GM12878 (cell line): ENCODE measurements at regions of chr9 and their contacts with region 1.

Region 1: GRCh38 chr9:99140685-99141314 is 35.9 kb downstream of the TGFBR1 start:
- DNase-seq: no peak
- ATAC-seq: peak; percentile 91
- H3K4me3 ChIP-seq: no peak overlapping the region
- H3K27ac ChIP-seq: no peak overlapping the region
- H3K4me1 ChIP-seq: peaks cover 5% of the 10 kb centered on the region
- H3K27me3 ChIP-seq: no peaks in the 10 kb centered on the region
- CTCF ChIP-seq: peak; percentile 97 to 98 (median 97)
- EP300 ChIP-seq: no peak
- POLR2A ChIP-seq: no peak
- RAD21 ChIP-seq: peak; percentile 98

Region 2: DNA sequence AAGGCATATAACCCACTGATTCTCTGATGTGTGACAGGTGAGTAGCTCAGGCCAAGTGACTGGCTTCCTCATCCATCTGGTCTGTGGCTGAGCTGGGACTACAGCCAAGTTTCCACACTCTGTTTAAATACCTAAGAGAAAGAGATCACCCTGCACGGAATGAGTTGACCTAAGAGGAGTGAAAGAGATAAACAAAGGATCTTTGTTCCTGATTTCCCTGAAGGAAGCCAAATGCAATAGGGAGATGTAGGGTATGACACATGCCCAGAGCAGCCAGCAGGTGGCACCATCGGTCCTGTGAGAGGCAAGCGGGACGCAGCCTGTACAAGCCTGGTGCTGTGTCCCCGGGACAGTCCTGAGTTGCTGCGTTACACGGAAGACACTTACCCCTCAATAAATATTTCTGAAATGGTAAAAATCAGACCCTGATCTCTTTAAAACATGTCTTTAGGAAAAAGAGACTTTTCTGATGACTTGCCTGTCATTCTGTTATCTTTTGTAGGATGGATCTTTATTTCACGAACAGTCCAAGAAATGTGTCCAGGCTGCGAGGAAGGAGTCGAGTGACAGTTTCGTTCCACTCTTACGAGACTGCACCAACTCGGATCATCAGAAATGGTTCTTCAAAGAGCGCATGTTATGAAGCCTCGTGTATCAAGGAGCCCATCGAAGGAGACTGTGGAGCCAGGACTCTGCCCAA is 292.2 kb before region 1 on chr9:
- CTCF ChIA-PET with region 1: interaction called, 78 read pairs
- POLR2A ChIA-PET with region 1: no interaction called
- RAD21 ChIA-PET with region 1: interaction called, 31 read pairs
- SMC1A ChIA-PET with region 1: interaction called, 17 read pairs
- in situ Hi-C with region 1: loop called (anchors 5 kb)
- intact Hi-C with region 1: loop called (anchors 1 kb)
- DNase-seq: peak; percentile 23
- ATAC-seq: peak; percentile 100
- H3K4me3 ChIP-seq: no peak overlapping the region
- H3K27ac ChIP-seq: no peak overlapping the region
- H3K4me1 ChIP-seq: no peaks in the 10 kb centered on the region
- H3K27me3 ChIP-seq: no peaks in the 10 kb centered on the region; a peak in 1 of 4 replicates
- CTCF ChIP-seq: peak; percentile 90 to 96 (median 94)
- EP300 ChIP-seq: no peak
- POLR2A ChIP-seq: no peak
- RAD21 ChIP-seq: peak; percentile 86

Region 3: GRCh38 chr9:98998441-98999151 is 142.2 kb before region 1 on chr9:
- CTCF ChIA-PET with region 1: interaction called, 304 read pairs
- POLR2A ChIA-PET with region 1: no interaction called
- RAD21 ChIA-PET with region 1: interaction called, 17 read pairs
- SMC1A ChIA-PET with region 1: interaction called, 110 read pairs
- in situ Hi-C with region 1: loop called (anchors 5 kb)
- intact Hi-C with region 1: loop called (anchors 1 kb)
- DNase-seq: no peak
- ATAC-seq: peak; percentile 92
- H3K4me3 ChIP-seq: no peak overlapping the region
- H3K27ac ChIP-seq: no peak overlapping the region
- H3K4me1 ChIP-seq: peaks cover 2% of the 10 kb centered on the region
- H3K27me3 ChIP-seq: 0 out of 4 replicates have a peak, but pooled peaks cover 0 to 2% of the 10 kb centered on the region in 2 experiments
- CTCF ChIP-seq: peak; percentile 76 to 96 (median 81)
- EP300 ChIP-seq: no peak
- POLR2A ChIP-seq: no peak
- RAD21 ChIP-seq: peak; percentile 62

Region 4: DNA sequence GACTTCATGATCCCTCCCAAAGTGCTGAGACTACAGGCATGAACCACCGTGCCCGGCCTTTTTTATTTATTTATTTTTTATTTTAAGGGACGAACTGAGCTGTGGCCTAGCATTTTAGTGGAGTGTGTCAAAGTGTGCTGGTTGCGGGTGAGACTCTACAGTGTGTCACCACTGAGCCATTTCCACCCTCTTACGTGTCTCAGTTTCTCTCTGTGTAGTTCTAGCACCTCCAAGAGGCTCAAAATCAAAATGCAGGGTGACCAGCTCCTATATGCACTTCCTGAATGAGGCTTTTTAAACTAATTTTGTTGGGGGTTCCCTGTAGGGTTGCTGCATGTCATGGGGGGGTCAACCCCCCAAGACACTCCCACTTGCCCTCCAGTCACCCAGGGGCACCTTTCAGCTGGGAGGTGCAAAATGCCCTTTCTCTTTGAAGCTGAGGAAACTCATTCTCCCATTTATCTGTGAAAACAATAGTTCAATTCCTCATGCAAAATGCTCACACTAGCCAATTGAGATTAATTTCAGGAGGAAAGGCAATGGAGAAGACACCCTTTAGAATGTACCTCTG is 127.8 kb before region 1 on chr9:
- CTCF ChIA-PET with region 1: interaction called, 13 read pairs
- POLR2A ChIA-PET with region 1: no interaction called
- RAD21 ChIA-PET with region 1: interaction called, 7 read pairs
- SMC1A ChIA-PET with region 1: interaction called, 17 read pairs
- in situ Hi-C with region 1: no loop called
- intact Hi-C with region 1: no loop called
- DNase-seq: no peak
- ATAC-seq: peak; percentile 51
- H3K4me3 ChIP-seq: no peak overlapping the region
- H3K27ac ChIP-seq: no peak overlapping the region
- H3K4me1 ChIP-seq: no peaks in the 10 kb centered on the region
- H3K27me3 ChIP-seq: no peaks in the 10 kb centered on the region
- CTCF ChIP-seq: 0 out of 6 replicates have a peak, but pooled peaks of 1 of the 3 experiments have one; percentile 6
- EP300 ChIP-seq: no peak
- POLR2A ChIP-seq: no peak
- RAD21 ChIP-seq: 0 out of 2 replicates have a peak, but pooled peaks have one; percentile 16

Region 5: DNA sequence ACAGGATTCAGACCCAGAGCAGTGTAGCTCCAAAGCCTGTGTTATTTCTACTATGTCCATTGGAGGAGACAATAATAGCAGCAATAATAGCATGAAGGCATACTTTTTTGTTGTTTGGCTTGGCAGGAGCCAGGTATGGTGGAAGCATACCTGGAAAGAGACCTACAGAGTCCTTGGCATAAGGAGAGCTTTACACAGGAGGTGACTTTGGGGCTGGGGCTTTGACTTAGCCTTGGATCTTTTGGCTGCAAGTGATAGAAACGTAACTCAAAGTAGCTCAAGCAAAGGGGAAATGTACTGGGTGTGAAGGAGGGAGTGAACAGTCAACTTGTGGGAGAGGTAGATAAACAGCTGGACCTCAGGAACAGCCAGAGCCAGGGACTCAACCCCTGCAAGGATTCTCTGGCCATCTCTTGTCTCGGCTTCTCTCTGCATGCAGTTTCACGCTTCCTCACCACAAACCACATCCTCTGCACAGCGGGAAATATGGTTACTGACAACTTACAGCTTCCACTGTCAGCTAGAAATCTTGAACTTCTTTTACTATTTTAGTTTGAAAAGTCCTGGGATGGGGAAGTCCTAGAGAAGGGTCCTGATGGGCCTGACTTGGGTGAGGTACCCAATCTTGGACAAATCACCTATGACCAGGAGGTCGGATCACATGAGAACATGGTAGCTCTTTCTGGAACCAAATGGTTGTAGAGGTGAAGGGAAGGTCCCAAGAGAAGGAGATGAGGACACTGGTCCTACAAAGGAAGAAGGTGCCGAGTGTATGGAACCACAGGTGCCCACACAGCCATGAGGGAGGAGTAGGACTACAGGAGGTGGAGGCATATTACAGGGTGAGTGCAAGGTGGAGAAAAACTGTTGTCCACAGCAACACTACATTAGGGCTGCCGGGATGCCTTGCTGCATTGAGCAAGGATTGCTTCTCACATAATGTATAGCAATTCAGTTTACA is 82.9 kb before region 1 on chr9:
- CTCF ChIA-PET with region 1: interaction called, 4 read pairs
- POLR2A ChIA-PET with region 1: interaction called, 3 read pairs
- RAD21 ChIA-PET with region 1: interaction called, 4 read pairs
- SMC1A ChIA-PET with region 1: interaction called, 24 read pairs
- in situ Hi-C with region 1: no loop called
- intact Hi-C with region 1: no loop called
- DNase-seq: peak; percentile 64
- ATAC-seq: peak; percentile 88
- H3K4me3 ChIP-seq: peak overlapping the region; percentile 25; the same call in 1 of the 2 replicates
- H3K27ac ChIP-seq: peak overlapping the region; percentile 15; the same call in 1 of the 2 replicates
- H3K4me1 ChIP-seq: peaks cover 27% of the 10 kb centered on the region
- H3K27me3 ChIP-seq: no peaks in the 10 kb centered on the region
- CTCF ChIP-seq: no peak
- EP300 ChIP-seq: no peak
- POLR2A ChIP-seq: no peak
- RAD21 ChIP-seq: no peak

Region 6: GRCh38 chr9:99130069-99130468 is 10.7 kb before region 1 on chr9:
- CTCF ChIA-PET with region 1: interaction called, 10 read pairs
- POLR2A ChIA-PET with region 1: interaction called, 3 read pairs
- RAD21 ChIA-PET with region 1: interaction called, 36 read pairs
- SMC1A ChIA-PET with region 1: interaction called, 129 read pairs
- in situ Hi-C with region 1: no loop called
- intact Hi-C with region 1: no loop called
- DNase-seq: peak; percentile 72
- ATAC-seq: peak; percentile 87
- H3K4me3 ChIP-seq: no peak overlapping the region
- H3K27ac ChIP-seq: peak overlapping the region; percentile 22
- H3K4me1 ChIP-seq: peaks cover 38% of the 10 kb centered on the region
- H3K27me3 ChIP-seq: no peaks in the 10 kb centered on the region
- CTCF ChIP-seq: no peak
- EP300 ChIP-seq: peak; percentile 81 to 95
- POLR2A ChIP-seq: no peak
- RAD21 ChIP-seq: 0 out of 2 replicates have a peak, but pooled peaks have one; percentile 2

Region 7: DNA sequence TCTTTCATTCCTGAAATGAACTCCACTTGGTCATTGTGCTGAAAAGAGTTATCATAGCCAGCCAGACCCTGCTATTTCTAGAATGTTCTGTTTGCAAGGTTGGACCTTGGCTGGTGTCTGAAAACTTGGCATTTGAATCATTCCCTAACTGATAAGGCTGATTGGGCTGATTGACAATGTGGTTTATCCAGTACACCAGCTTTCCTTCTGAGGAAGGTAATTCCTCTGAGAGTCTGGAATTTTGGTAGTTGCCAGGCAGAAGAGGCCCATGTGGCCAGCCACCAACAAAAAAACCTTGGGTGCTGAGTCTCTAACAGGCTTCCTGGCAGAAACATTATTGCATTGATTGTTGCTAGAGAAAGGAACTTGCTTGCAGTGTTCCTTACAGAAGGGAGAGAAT is 96.6 kb after region 1 on chr9:
- CTCF ChIA-PET with region 1: no interaction called
- POLR2A ChIA-PET with region 1: no interaction called
- RAD21 ChIA-PET with region 1: no interaction called
- SMC1A ChIA-PET with region 1: no interaction called
- in situ Hi-C with region 1: no loop called
- intact Hi-C with region 1: no loop called
- DNase-seq: no peak
- ATAC-seq: no peak
- H3K4me3 ChIP-seq: no peak overlapping the region; the same call in 1 of the 2 replicates
- H3K27ac ChIP-seq: peak overlapping the region; percentile 94
- H3K4me1 ChIP-seq: peaks cover 43% of the 10 kb centered on the region
- H3K27me3 ChIP-seq: no peaks in the 10 kb centered on the region
- CTCF ChIP-seq: no peak
- EP300 ChIP-seq: no peak
- POLR2A ChIP-seq: no peak
- RAD21 ChIP-seq: no peak